Naive thymus-derived CD4-positive, alpha-beta T cell (primary cell): ENCODE measurements at regions of chr19 and their contacts with region 1.

Region 1: GRCh38 chr19:34276614-34277013 is 22.3 kb downstream of the GARRE1 start:
- DNase-seq: no peak
- ATAC-seq: no peak
- H3K4me3 ChIP-seq: no peak overlapping the region
- H3K4me3 Mint-ChIP-seq: peak overlapping the region in 9 of 10 donors; percentile 9 to 72 (median 59)
- H3K27ac ChIP-seq: peak overlapping the region; percentile 18
- H3K27ac Mint-ChIP-seq: peak overlapping the region in 8 of 9 donors; percentile 64 to 98 (median 81)
- H3K4me1 ChIP-seq: peaks cover 4 to 52% of the 10 kb centered on the region in 2 donors
- H3K4me1 Mint-ChIP-seq: peaks cover 13 to 95% (median 81%) of the 10 kb centered on the region in 7 donors
- H3K27me3 ChIP-seq: no peaks in the 10 kb centered on the region
- H3K27me3 Mint-ChIP-seq: no peaks in the 10 kb centered on the region

Region 2: DNA sequence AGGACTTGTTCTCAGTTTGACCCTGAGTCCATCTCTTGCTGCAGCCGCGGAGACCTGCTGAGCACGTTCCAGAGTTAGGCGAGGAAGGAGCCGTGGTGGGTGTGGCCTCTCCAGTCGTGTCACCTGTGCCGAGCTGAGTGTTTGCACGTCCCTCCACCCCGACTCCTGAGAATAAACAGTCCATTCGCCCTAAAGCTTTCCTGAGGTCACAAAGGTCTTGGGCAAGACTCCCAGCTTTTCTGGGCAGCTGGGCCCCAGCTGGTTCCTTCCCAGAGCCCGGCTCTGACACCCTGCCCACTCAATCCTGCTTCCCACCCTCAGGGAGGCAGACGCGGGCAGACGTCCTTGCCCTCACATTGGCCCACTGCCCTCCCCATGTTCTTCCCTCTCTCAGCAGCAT is 337.8 kb before region 1 on chr19:
- CTCF ChIA-PET with region 1: no interaction called
- POLR2A ChIA-PET with region 1: no interaction called
- intact Hi-C with region 1: no loop called
- DNase-seq: no peak
- ATAC-seq: no peak
- H3K4me3 ChIP-seq: no peak overlapping the region
- H3K4me3 Mint-ChIP-seq: no peak overlapping the region
- H3K27ac ChIP-seq: no peak overlapping the region
- H3K27ac Mint-ChIP-seq: no peak overlapping the region
- H3K4me1 ChIP-seq: no peaks in the 10 kb centered on the region
- H3K4me1 Mint-ChIP-seq: no peaks in the 10 kb centered on the region
- H3K27me3 ChIP-seq: no peaks in the 10 kb centered on the region
- H3K27me3 Mint-ChIP-seq: peaks cover 0 to 17% (median 7%) of the 10 kb centered on the region in 5 donors

Region 3: GRCh38 chr19:34260771-34261173 is 15.8 kb before region 1 on chr19:
- CTCF ChIA-PET with region 1: interaction called, 3 read pairs
- POLR2A ChIA-PET with region 1: interaction called, 11 read pairs
- intact Hi-C with region 1: loop called in 1 of 2 experiments (anchors 2 kb)
- DNase-seq: no peak
- ATAC-seq: no peak
- H3K4me3 ChIP-seq: no peak overlapping the region
- H3K4me3 Mint-ChIP-seq: peak overlapping the region in 7 of 10 donors; percentile 12 to 56 (median 20)
- H3K27ac ChIP-seq: no peak overlapping the region
- H3K27ac Mint-ChIP-seq: peak overlapping the region in 8 of 9 donors; percentile 42 to 84 (median 79)
- H3K4me1 ChIP-seq: peaks cover 3 to 44% of the 10 kb centered on the region in 2 donors
- H3K4me1 Mint-ChIP-seq: peaks cover 9 to 82% (median 70%) of the 10 kb centered on the region in 7 donors
- H3K27me3 ChIP-seq: no peaks in the 10 kb centered on the region
- H3K27me3 Mint-ChIP-seq: no peaks in the 10 kb centered on the region

Region 4: GRCh38 chr19:34300962-34301361 is 24.3 kb after region 1 on chr19:
- CTCF ChIA-PET with region 1: no interaction called
- POLR2A ChIA-PET with region 1: no interaction called
- intact Hi-C with region 1: no loop called
- DNase-seq: no peak
- ATAC-seq: no peak
- H3K4me3 ChIP-seq: no peak overlapping the region
- H3K4me3 Mint-ChIP-seq: no peak overlapping the region
- H3K27ac ChIP-seq: no peak overlapping the region
- H3K27ac Mint-ChIP-seq: peak overlapping the region in 6 of 9 donors; percentile 8 to 90 (median 49)
- H3K4me1 ChIP-seq: no peaks in the 10 kb centered on the region
- H3K4me1 Mint-ChIP-seq: peaks cover 2 to 41% (median 28%) of the 10 kb centered on the region in 7 donors
- H3K27me3 ChIP-seq: no peaks in the 10 kb centered on the region
- H3K27me3 Mint-ChIP-seq: no peaks in the 10 kb centered on the region